ENCODE measurements at regions of chr4 and their contacts with region 1.

Region 1: GRCh38 chr4:114378306-114378903 is 220.2 kb upstream of the UGT8 start:
- DNase-seq: peak in 1 of 2 experiments; percentile 27
- H3K4me3 ChIP-seq: no peak overlapping the region
- H3K4me3 Mint-ChIP-seq: no peak overlapping the region
- H3K27ac Mint-ChIP-seq: no peak overlapping the region
- H3K4me1 ChIP-seq: no peaks in the 10 kb centered on the region
- H3K4me1 Mint-ChIP-seq: no peaks in the 10 kb centered on the region
- H3K27me3 ChIP-seq: no peaks in the 10 kb centered on the region
- H3K27me3 Mint-ChIP-seq: no peaks in the 10 kb centered on the region
- CTCF ChIP-seq: peak in 1 of 2 experiments; percentile 48

Region 2: GRCh38 chr4:113878668-113879067 is 499.7 kb before region 1 on chr4:
- CTCF ChIA-PET with region 1: interaction called, 5 read pairs
- POLR2A ChIA-PET with region 1: no interaction called
- intact Hi-C with region 1: loop called (anchors 1 kb)
- DNase-seq: peak; percentile 74 to 75
- H3K4me3 ChIP-seq: no peak overlapping the region
- H3K4me3 Mint-ChIP-seq: no peak overlapping the region
- H3K27ac Mint-ChIP-seq: no peak overlapping the region
- H3K4me1 ChIP-seq: no peaks in the 10 kb centered on the region
- H3K4me1 Mint-ChIP-seq: peaks cover 9% of the 10 kb centered on the region
- H3K27me3 ChIP-seq: no peaks in the 10 kb centered on the region
- H3K27me3 Mint-ChIP-seq: no peaks in the 10 kb centered on the region
- CTCF ChIP-seq: peak; percentile 60 to 76

Region 3: DNA sequence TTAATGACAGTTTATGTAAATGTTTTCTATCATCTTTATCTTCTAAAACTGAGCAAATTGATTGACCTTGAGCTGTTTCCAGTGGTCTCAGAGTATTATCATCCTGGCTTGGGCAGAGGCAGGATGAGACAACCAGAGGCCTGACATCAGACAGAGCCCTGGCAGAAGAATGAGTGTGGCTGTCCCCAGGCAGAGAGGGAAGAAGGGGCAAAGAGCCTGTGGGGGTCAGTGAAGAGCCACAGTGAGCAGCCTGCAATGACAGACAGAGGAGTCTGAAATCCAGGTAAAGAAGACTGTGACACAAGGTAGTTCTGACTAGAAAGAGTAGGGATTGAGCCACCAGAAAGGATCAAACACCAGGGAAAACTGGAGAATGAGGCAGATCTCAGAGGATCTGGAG is 216.6 kb before region 1 on chr4:
- CTCF ChIA-PET with region 1: no interaction called
- POLR2A ChIA-PET with region 1: no interaction called
- intact Hi-C with region 1: loop called (anchors 1 kb)
- DNase-seq: peak in 1 of 2 experiments; percentile 34
- H3K4me3 ChIP-seq: no peak overlapping the region
- H3K4me3 Mint-ChIP-seq: no peak overlapping the region
- H3K27ac Mint-ChIP-seq: no peak overlapping the region
- H3K4me1 ChIP-seq: peaks cover 13% of the 10 kb centered on the region
- H3K4me1 Mint-ChIP-seq: no peaks in the 10 kb centered on the region
- H3K27me3 ChIP-seq: no peaks in the 10 kb centered on the region
- H3K27me3 Mint-ChIP-seq: no peaks in the 10 kb centered on the region
- CTCF ChIP-seq: peak in 1 of 2 experiments; percentile 17

Region 4: GRCh38 chr4:114208574-114209151 is 169.7 kb before region 1 on chr4:
- CTCF ChIA-PET with region 1: no interaction called
- POLR2A ChIA-PET with region 1: no interaction called
- intact Hi-C with region 1: loop called (anchors 1 kb)
- DNase-seq: no peak
- H3K4me3 ChIP-seq: no peak overlapping the region
- H3K4me3 Mint-ChIP-seq: no peak overlapping the region
- H3K27ac Mint-ChIP-seq: no peak overlapping the region
- H3K4me1 ChIP-seq: no peaks in the 10 kb centered on the region
- H3K4me1 Mint-ChIP-seq: no peaks in the 10 kb centered on the region
- H3K27me3 ChIP-seq: no peaks in the 10 kb centered on the region
- H3K27me3 Mint-ChIP-seq: no peaks in the 10 kb centered on the region
- CTCF ChIP-seq: no peak

Region 5: GRCh38 chr4:114615436-114615885 is 237.1 kb after region 1 on chr4:
- CTCF ChIA-PET with region 1: no interaction called
- POLR2A ChIA-PET with region 1: no interaction called
- intact Hi-C with region 1: no loop called
- DNase-seq: no peak
- H3K4me3 ChIP-seq: peak overlapping the region; percentile 27
- H3K4me3 Mint-ChIP-seq: peak overlapping the region; percentile 78
- H3K27ac Mint-ChIP-seq: peak overlapping the region; percentile 91
- H3K4me1 ChIP-seq: peaks cover 13% of the 10 kb centered on the region
- H3K4me1 Mint-ChIP-seq: peaks cover 7% of the 10 kb centered on the region
- H3K27me3 ChIP-seq: no peaks in the 10 kb centered on the region
- H3K27me3 Mint-ChIP-seq: no peaks in the 10 kb centered on the region
- CTCF ChIP-seq: no peak